SK-N-SH (cell line): ENCODE measurements at regions of chr11 and their contacts with region 1.

Region 1: DNA sequence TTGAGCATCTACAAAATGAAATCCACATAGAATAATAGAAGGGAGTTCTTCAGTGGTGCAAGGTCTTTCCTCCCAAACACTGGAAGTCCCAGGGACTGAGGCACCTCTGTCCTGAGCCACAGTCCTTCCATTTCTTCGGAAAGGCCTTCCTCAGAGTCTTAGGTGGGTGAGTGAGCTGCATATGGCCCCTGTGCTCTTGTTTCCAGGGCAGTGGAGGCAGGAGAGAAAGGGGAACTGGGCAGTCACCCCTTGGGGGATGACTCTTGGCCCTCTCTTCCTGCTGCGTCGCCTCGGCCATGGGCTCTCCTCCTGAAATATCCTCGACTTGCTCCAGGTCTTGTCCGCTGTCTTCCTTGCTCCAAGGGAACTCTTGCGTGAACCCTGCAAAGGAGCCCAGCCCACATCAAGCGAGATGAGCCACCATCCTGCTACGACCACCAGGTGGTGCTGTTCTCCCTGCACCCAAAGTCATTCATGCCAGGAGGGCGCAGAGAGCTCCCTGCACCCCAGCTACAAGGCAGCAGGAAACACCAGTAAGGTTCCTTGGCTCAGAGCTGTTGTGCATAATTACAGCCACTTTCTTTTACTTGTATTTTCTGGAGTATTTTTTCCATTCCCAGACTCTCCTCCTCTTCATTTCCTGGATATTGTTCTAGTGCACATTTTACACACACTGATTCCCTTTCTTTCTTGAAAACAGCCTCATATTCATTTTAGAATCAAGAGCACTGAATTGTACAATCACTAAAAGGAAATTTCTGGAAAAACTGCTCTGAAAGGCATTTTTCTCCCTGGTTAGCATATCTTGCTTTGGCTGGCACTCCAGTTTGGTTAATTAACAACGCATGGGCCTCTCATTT is 397.8 kb downstream of the OPCML start:
- DNase-seq: peak; percentile 68
- H3K4me3 ChIP-seq: peak overlapping the region in 1 of 2 experiments; percentile 50; a peak in 1 of 4 replicates
- H3K27ac ChIP-seq: no peak overlapping the region
- H3K4me1 ChIP-seq: no peaks in the 10 kb centered on the region; a peak in 1 of 4 replicates
- H3K27me3 ChIP-seq: no peaks in the 10 kb centered on the region
- CTCF ChIP-seq: peak; percentile 44
- EP300 ChIP-seq: no peak
- RAD21 ChIP-seq: peak; percentile 74

Region 2: DNA sequence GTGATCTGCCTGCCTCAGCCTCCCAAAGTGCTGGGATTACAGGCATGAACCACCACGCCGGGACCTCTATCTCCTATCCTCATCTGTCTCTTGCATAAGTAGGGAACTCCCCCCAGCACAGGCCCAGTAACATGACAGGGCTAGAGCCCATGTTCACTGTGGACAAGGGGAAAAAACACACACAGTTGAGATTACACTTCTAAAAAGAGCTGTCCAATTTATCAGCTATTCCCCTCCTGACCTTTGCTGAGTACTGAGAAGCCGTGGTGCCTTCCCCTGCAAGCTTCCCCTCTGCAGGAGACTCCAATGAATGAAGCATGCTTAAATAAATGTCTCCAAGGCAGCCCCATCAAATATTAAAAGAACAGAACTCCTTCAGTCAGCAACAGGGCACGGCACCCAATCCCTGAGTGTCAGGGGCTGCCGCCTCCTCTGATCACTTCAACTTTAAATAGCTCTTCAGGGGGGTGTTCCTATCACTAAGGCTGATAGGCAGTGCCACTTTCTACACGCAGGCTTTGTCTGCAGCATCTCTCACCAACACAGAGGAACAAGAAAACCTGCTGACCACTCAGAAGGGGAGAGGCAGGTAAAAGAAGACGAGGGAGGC is 12.3 kb after region 1 on chr11:
- CTCF ChIA-PET with region 1: interaction called, 53 read pairs
- POLR2A ChIA-PET with region 1: no interaction called
- DNase-seq: no peak
- H3K4me3 ChIP-seq: no peak overlapping the region
- H3K27ac ChIP-seq: no peak overlapping the region
- H3K4me1 ChIP-seq: no peaks in the 10 kb centered on the region; a peak in 1 of 4 replicates
- H3K27me3 ChIP-seq: no peaks in the 10 kb centered on the region
- CTCF ChIP-seq: no peak
- EP300 ChIP-seq: no peak
- RAD21 ChIP-seq: no peak

Region 3: DNA sequence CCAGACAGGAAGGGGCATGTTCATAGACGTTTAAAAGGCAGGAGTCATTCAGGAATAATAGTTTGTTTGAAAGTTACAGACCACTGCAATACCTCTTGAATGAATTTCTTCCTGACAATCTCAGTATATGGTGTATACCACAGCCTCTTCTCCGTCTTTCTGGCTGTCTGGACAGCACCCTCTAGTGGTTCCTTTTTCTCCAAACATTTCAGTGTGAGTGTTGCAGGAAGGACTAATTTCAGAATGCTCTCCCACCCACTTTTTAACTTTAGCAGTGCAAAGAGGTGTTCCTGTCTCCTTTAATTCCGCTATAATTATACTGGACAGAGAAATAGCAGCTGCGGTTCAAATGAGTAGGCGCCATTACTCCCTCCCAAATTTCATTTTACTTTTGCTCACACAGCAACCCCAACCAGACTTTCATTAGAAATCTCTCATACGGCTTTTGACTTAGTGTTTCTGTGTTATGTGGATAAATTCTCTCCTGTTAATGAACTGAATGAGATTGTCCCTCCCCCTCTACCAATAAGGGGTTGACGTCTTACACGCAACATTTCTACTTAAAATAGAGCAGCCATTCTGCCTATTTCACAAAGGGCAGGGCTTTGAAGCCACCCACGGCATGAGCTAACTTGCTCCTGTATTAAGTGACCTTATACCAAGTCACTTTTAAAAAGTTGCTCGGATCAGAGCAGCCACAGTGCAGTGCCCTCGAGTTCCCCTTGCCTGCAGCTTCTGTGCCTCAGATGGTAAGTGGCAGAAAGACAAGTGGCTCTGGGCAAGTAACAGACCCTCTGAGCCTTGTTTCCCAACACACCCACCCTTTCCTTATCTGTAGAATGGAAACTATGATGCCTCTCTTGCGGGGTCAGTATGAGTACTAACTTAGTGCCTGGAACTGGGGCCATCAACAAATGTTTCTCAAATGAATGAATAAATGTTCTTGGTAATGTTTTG is 29.2 kb after region 1 on chr11:
- CTCF ChIA-PET with region 1: interaction called, 30 read pairs
- POLR2A ChIA-PET with region 1: no interaction called
- DNase-seq: peak; percentile 55
- H3K4me3 ChIP-seq: no peak overlapping the region
- H3K27ac ChIP-seq: no peak overlapping the region
- H3K4me1 ChIP-seq: no peaks in the 10 kb centered on the region
- H3K27me3 ChIP-seq: no peaks in the 10 kb centered on the region
- CTCF ChIP-seq: peak; percentile 38; the same call in 1 of the 2 replicates
- EP300 ChIP-seq: no peak
- RAD21 ChIP-seq: peak; percentile 65

Region 4: DNA sequence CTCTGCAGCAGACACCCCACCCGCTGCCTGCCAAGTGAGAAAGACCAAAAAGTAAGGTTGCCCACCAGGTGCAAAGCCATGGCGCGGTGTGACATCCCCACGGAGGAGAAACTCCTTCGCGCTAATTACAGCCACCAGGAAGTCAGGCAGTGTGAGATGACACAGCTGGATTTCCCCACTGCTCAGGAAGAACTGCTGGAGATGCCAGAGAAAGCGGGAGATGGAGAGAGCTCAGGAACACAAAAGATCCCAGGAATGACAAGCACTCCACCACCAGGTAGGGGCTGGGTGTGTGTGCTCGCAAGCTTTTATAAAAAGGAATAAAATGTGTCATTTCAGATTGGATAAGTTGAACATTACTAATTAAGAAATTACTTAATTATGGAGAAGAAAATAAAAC is 105.0 kb after region 1 on chr11:
- CTCF ChIA-PET with region 1: no interaction called
- POLR2A ChIA-PET with region 1: no interaction called
- DNase-seq: no peak
- H3K4me3 ChIP-seq: no peak overlapping the region
- H3K27ac ChIP-seq: no peak overlapping the region
- H3K4me1 ChIP-seq: peaks cover 0 to 8% of the 10 kb centered on the region in 2 experiments; a peak in 2 of 4 replicates
- H3K27me3 ChIP-seq: no peaks in the 10 kb centered on the region
- CTCF ChIP-seq: no peak
- EP300 ChIP-seq: no peak
- RAD21 ChIP-seq: no peak

Region 5: DNA sequence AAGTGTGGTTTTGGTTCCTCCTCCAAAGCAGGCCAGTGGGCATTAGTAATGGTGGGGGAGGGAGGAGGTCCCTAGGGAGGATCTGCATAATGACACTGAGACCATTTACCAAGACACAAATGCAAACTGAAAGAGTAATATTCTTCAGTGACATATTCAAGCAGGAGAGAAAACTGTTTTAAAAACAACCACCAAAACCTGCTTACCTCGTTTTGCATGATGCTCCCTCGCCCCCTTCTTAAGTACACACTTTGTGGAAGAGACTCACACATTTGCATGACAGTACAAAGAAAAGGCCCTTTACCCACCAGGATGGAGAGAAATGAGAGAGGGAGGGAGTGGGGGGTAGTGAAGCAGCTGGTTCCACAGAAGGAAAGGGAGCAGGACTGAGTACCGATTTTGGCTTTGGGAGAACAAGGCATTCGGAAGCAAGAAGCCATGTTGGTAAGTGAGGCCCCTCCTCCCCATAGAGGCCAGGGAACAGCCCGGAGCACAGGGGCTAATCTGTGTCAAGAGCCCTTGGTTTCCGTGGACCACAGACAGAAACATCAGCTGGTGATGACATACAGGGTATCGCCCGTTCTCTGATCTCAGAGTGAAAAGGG is 410.8 kb after region 1 on chr11:
- CTCF ChIA-PET with region 1: no interaction called
- POLR2A ChIA-PET with region 1: no interaction called
- DNase-seq: no peak
- H3K4me3 ChIP-seq: no peak overlapping the region
- H3K27ac ChIP-seq: no peak overlapping the region
- H3K4me1 ChIP-seq: peaks cover 0 to 8% of the 10 kb centered on the region in 2 experiments; a peak in 1 of 4 replicates
- H3K27me3 ChIP-seq: no peaks in the 10 kb centered on the region
- CTCF ChIP-seq: no peak
- EP300 ChIP-seq: no peak
- RAD21 ChIP-seq: no peak

Region 6: GRCh38 chr11:133821776-133822175 is 687.2 kb after region 1 on chr11:
- CTCF ChIA-PET with region 1: interaction called, 25 read pairs
- POLR2A ChIA-PET with region 1: no interaction called
- DNase-seq: peak; percentile 66
- H3K4me3 ChIP-seq: peak overlapping the region in 1 of 2 experiments; percentile 32; a peak in 1 of 4 replicates
- H3K27ac ChIP-seq: no peak overlapping the region
- H3K4me1 ChIP-seq: no peaks in the 10 kb centered on the region; a peak in 1 of 4 replicates
- H3K27me3 ChIP-seq: no peaks in the 10 kb centered on the region
- CTCF ChIP-seq: peak; percentile 25; the same call in 1 of the 2 replicates
- EP300 ChIP-seq: no peak
- RAD21 ChIP-seq: peak; percentile 69

Region 7: DNA sequence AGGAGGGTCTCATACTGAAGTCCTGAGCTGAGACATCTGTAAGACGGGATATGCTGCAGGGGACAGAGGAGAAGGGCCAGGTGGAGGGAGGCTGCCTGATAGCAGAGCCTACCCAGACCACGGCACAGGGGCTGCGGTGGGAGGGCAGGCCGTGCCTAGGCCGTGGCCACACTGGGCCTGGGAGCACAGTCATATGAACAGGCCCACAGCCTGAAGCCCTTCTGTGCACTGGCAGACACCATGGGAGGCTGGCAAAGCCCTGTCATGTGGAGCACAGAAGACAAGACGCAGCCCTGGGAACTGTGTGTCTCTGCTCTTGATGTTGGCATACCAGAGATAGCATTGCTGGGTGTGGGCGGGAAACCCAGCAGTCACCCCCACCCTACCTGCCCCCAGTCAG is 707.5 kb after region 1 on chr11:
- CTCF ChIA-PET with region 1: interaction called, 72 read pairs
- POLR2A ChIA-PET with region 1: no interaction called
- DNase-seq: no peak
- H3K4me3 ChIP-seq: no peak overlapping the region
- H3K27ac ChIP-seq: no peak overlapping the region
- H3K4me1 ChIP-seq: no peaks in the 10 kb centered on the region; a peak in 1 of 4 replicates
- H3K27me3 ChIP-seq: no peaks in the 10 kb centered on the region
- CTCF ChIP-seq: no peak
- EP300 ChIP-seq: no peak
- RAD21 ChIP-seq: no peak